Naive thymus-derived CD4-positive, alpha-beta T cell (primary cell): ENCODE measurements at regions of chr1 and their contacts with region 1.

Region 1: DNA sequence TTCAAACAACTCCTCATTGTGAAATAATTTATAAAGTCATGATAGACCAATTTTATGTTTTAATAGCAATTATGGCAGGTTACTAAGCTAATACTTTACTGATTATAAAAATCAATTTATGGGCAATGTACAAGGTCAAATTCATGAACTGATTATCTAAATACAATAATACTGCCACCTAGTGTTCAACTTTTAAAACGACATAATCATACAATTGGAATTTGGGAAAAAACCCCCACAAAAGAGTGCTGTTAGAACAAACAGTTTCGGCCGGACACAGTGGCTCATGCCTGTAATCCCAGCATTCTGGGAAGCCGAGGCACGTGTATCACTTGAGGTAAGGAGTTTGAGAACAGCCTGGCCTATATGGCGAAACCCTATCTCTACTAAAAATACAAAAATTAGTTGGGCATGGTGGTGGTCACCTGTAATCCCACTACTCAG is 14.0 kb downstream of the GTF2B start:
- DNase-seq: peak in 5 of 9 donors; percentile 7 to 35 (median 24)
- ATAC-seq: peak; percentile 45
- H3K4me3 ChIP-seq: no peak overlapping the region
- H3K4me3 Mint-ChIP-seq: peak overlapping the region in 1 of 10 donors; percentile 23
- H3K27ac ChIP-seq: no peak overlapping the region
- H3K27ac Mint-ChIP-seq: peak overlapping the region in 2 of 9 donors; percentile 38 to 64
- H3K4me1 ChIP-seq: peaks cover 3 to 13% of the 10 kb centered on the region in 2 donors
- H3K4me1 Mint-ChIP-seq: peaks cover 28 to 67% (median 64%) of the 10 kb centered on the region in 7 donors
- H3K27me3 ChIP-seq: no peaks in the 10 kb centered on the region
- H3K27me3 Mint-ChIP-seq: no peaks in the 10 kb centered on the region

Region 2: GRCh38 chr1:88608139-88608943 is 269.1 kb before region 1 on chr1:
- CTCF ChIA-PET with region 1: interaction called, 3 read pairs
- POLR2A ChIA-PET with region 1: no interaction called
- intact Hi-C with region 1: loop called (anchors 1 to 5 kb)
- DNase-seq: peak in 6 of 9 donors; percentile 2 to 38 (median 14)
- ATAC-seq: peak; percentile 60
- H3K4me3 ChIP-seq: no peak overlapping the region
- H3K4me3 Mint-ChIP-seq: peak overlapping the region in 1 of 10 donors; percentile 1
- H3K27ac ChIP-seq: no peak overlapping the region
- H3K27ac Mint-ChIP-seq: no peak overlapping the region
- H3K4me1 ChIP-seq: no peaks in the 10 kb centered on the region
- H3K4me1 Mint-ChIP-seq: no peaks in the 10 kb centered on the region
- H3K27me3 ChIP-seq: no peaks in the 10 kb centered on the region
- H3K27me3 Mint-ChIP-seq: peaks cover 0 to 9% (median 5%) of the 10 kb centered on the region in 5 donors

Region 3: GRCh38 chr1:88655685-88656299 is 221.6 kb before region 1 on chr1:
- CTCF ChIA-PET with region 1: interaction called, 18 read pairs
- POLR2A ChIA-PET with region 1: no interaction called
- intact Hi-C with region 1: loop called (anchors 1 kb)
- DNase-seq: peak in 6 of 9 donors; percentile 5 to 49 (median 38)
- ATAC-seq: peak; percentile 34
- H3K4me3 ChIP-seq: no peak overlapping the region
- H3K4me3 Mint-ChIP-seq: no peak overlapping the region
- H3K27ac ChIP-seq: no peak overlapping the region
- H3K27ac Mint-ChIP-seq: no peak overlapping the region
- H3K4me1 ChIP-seq: no peaks in the 10 kb centered on the region
- H3K4me1 Mint-ChIP-seq: peaks cover 2 to 20% (median 16%) of the 10 kb centered on the region in 7 donors
- H3K27me3 ChIP-seq: no peaks in the 10 kb centered on the region
- H3K27me3 Mint-ChIP-seq: peaks cover 0 to 3% (median 0%) of the 10 kb centered on the region in 5 donors

Region 4: GRCh38 chr1:88661951-88662699 is 215.3 kb before region 1 on chr1:
- CTCF ChIA-PET with region 1: interaction called, 15 read pairs
- POLR2A ChIA-PET with region 1: no interaction called
- intact Hi-C with region 1: no loop called
- DNase-seq: no peak
- ATAC-seq: no peak
- H3K4me3 ChIP-seq: no peak overlapping the region
- H3K4me3 Mint-ChIP-seq: peak overlapping the region in 7 of 10 donors; percentile 12 to 85 (median 74)
- H3K27ac ChIP-seq: peak overlapping the region; percentile 56
- H3K27ac Mint-ChIP-seq: peak overlapping the region in 8 of 9 donors; percentile 65 to 94 (median 82)
- H3K4me1 ChIP-seq: peaks cover 0 to 10% of the 10 kb centered on the region in 2 donors
- H3K4me1 Mint-ChIP-seq: peaks cover 11 to 42% (median 36%) of the 10 kb centered on the region in 7 donors
- H3K27me3 ChIP-seq: no peaks in the 10 kb centered on the region
- H3K27me3 Mint-ChIP-seq: no peaks in the 10 kb centered on the region

Region 5: GRCh38 chr1:88736639-88737248 is 140.7 kb before region 1 on chr1:
- CTCF ChIA-PET with region 1: no interaction called
- POLR2A ChIA-PET with region 1: no interaction called
- intact Hi-C with region 1: loop called in 1 of 2 experiments (anchors 2 kb)
- DNase-seq: peak in 1 of 9 donors; percentile 26
- ATAC-seq: peak; percentile 63
- H3K4me3 ChIP-seq: no peak overlapping the region
- H3K4me3 Mint-ChIP-seq: no peak overlapping the region
- H3K27ac ChIP-seq: no peak overlapping the region
- H3K27ac Mint-ChIP-seq: no peak overlapping the region
- H3K4me1 ChIP-seq: peaks cover 0 to 4% of the 10 kb centered on the region in 2 donors
- H3K4me1 Mint-ChIP-seq: peaks cover 9 to 41% (median 25%) of the 10 kb centered on the region in 7 donors
- H3K27me3 ChIP-seq: no peaks in the 10 kb centered on the region
- H3K27me3 Mint-ChIP-seq: no peaks in the 10 kb centered on the region

Region 6: DNA sequence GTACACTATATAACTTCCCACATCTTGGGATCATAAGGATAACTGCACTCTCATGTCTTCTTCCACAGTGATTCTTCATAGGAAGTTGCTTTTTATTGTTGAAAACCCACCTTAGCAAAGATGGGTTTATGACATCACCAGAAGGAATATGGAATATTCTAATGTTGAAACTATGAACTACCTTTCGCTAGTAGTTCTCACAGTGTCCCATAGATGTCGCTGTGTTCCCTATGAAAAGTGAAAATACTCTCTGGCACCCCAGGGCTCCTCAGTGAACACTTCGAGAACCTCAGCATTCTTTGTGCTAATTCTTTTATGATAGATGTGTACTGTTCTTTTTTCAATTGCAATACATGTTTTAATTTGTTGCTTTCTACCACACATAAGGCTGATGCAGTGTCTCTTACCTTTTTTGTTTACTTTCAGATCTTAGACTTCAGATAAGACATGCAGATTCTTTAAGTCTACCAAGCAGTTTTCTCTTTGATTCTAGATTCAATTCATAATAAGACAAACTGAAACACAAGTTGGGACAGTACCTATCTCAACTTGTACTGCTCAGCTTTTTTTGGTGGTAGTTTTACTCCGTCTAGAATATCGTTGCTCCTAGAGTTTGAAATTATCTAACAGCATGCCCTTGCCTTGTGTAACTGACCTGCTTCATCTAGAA is 76.9 kb before region 1 on chr1:
- CTCF ChIA-PET with region 1: interaction called, 3 read pairs
- POLR2A ChIA-PET with region 1: no interaction called
- intact Hi-C with region 1: loop called (anchors 1 to 5 kb)
- DNase-seq: peak in 6 of 9 donors; percentile 6 to 28 (median 26)
- ATAC-seq: peak; percentile 80
- H3K4me3 ChIP-seq: no peak overlapping the region
- H3K4me3 Mint-ChIP-seq: peak overlapping the region in 1 of 10 donors; percentile 17
- H3K27ac ChIP-seq: no peak overlapping the region
- H3K27ac Mint-ChIP-seq: peak overlapping the region in 3 of 9 donors; percentile 31 to 64 (median 47)
- H3K4me1 ChIP-seq: no peaks in the 10 kb centered on the region
- H3K4me1 Mint-ChIP-seq: peaks cover 0 to 14% (median 5%) of the 10 kb centered on the region in 7 donors
- H3K27me3 ChIP-seq: no peaks in the 10 kb centered on the region
- H3K27me3 Mint-ChIP-seq: no peaks in the 10 kb centered on the region

Region 7: DNA sequence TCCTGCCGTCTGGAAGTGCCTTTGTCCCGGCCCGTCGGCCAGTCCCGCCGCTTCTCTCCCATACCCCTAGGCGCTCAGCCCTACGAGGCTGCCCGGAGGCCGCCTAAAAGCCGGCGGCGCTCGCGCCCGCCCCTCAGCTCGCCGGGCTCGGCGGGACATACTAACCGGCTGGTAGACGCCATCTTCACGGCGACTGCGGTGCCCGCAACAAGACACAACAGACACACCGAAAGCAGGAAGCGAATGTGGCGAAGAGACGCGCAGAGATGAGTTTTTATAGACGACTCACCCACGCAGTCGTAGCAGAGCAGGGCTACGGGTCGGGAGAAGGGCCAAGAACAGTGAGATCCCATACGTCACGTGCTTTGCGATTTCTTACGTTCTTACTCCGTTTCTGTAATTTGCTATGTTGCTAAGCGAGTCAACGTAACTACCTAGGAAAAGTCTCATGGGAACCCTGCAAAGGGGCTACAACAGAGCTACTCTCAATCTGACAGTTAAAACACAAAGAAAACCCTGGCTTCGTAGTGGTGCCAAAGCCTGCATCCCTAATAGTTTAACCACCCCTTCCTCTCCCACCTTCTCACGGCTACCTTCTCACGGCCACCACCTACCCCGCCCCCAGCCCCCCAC is 14.0 kb after region 1 on chr1 and contains the start of gene GTF2B:
- CTCF ChIA-PET with region 1: interaction called, 19 read pairs
- POLR2A ChIA-PET with region 1: interaction called, 18 read pairs
- intact Hi-C with region 1: loop called in 1 of 2 experiments (anchors 1 kb)
- DNase-seq: peak; percentile 86 to 96 (median 94)
- ATAC-seq: peak; percentile 97
- H3K4me3 ChIP-seq: peak within 1 kb of the TSS; percentile 86
- H3K4me3 Mint-ChIP-seq: peak within 1 kb of the TSS; percentile 87 to 99 (median 95)
- H3K27ac ChIP-seq: peak within 1 kb of the TSS; percentile 91
- H3K27ac Mint-ChIP-seq: peak within 1 kb of the TSS; percentile 93 to 98 (median 97)
- H3K4me1 ChIP-seq: peaks cover 26 to 27% of the 10 kb centered on the region in 2 donors
- H3K4me1 Mint-ChIP-seq: peaks cover 23 to 59% (median 48%) of the 10 kb centered on the region in 7 donors
- H3K27me3 ChIP-seq: no peaks in the 10 kb centered on the region
- H3K27me3 Mint-ChIP-seq: peaks cover 0 to 2% (median 0%) of the 10 kb centered on the region in 5 donors
- total RNA-seq, gene GTF2B: 41.3 to 53.6 (median 47.3) TPM